WTC11 (cell line): ENCODE measurements at regions of chr17 and their contacts with region 1.

Region 1: DNA sequence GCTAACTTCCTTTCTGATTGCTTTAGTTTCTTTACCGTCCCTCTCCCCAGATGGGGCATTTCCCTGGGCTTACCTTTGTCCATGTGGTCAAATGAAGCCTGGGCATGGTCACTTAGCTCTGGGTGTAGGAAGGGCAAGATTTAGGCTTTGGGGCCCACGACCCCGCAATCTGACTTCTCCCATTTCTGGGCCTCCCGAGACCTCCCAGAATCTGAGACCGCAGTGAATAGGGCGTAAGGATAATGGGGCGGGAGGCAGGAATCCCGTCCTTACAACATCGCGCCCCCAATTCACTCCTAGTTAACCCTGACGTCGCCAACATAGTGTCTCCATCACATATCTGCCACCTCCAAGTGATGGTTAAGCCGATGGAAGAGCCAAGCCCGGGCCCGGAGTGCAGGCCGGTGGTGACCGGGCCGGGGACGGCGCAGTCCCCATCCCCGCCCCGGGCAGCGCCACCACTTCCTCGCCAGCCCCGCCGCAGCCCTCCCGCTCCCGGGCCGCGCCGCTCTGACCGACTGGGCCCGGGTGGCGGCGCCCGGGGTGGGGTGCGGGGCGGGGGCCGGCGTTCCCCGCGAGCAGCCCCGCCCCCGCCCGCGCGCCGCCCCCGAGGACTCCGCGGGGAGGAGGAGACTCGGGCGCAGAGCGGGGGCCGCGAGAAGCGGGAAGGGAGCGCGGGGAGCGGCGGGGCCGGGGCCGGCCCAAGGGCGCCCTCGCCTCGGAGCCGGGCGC is at the start of gene RHBDL3:
- DNase-seq: peak; percentile 36
- ATAC-seq: peak; percentile 31
- H3K4me3 Mint-ChIP-seq: peak within 1 kb of the TSS; percentile 78
- H3K27ac Mint-ChIP-seq: no peak within 1 kb of the TSS
- H3K4me1 Mint-ChIP-seq: peaks cover 40% of the 10 kb centered on the region
- H3K27me3 Mint-ChIP-seq: peaks cover 51% of the 10 kb centered on the region
- CTCF ChIP-seq: no peak
- total RNA-seq, gene RHBDL3: 11.3 to 13.2 TPM (median 11.6 TPM) in 3 replicates

Region 2: DNA sequence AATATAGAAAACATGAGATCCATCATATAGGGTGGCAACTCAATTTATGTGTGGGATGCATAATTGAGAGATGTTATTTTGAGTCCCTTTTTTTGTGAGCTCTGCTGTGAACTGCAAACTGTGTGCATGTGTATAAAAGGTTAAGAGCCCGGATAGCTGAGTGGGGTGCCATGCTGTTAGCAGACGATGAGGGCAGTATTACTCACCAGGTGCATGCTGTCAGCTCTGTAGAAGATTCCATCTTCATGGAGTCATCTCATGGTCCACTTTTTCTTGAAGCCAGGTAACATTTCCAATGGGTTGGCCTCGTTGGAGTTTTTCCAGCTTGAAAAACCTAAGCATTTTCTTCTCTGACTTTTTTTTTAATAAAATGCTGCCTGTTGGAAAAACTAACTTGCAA is 42.7 kb before region 1 on chr17:
- CTCF ChIA-PET with region 1: no interaction called
- POLR2A ChIA-PET with region 1: no interaction called
- DNase-seq: no peak
- ATAC-seq: no peak
- H3K4me3 Mint-ChIP-seq: no peak overlapping the region
- H3K27ac Mint-ChIP-seq: no peak overlapping the region
- H3K4me1 Mint-ChIP-seq: peaks cover 11% of the 10 kb centered on the region
- H3K27me3 Mint-ChIP-seq: no peaks in the 10 kb centered on the region
- CTCF ChIP-seq: no peak

Region 3: DNA sequence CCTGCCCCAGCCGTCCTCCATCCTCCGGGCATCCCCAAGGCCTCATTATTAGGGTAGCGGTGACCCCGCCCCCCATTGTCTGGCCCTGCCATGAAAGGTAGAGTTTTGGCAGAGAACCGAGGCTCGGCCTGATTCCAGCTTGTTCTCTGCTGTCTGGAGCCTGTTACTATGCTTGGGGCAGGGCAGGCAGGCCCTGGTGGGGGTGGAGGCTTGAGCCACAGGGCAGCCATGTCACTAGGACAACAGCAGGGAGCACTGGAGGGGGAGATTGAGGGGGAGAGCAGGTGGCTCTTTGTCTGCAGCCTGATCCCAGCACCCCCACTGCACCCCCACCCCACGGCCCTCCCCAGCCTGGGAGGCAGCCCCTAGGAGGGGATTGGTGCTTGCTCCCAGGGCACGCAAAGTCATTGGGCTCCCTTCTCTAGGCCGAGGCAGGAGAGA is 15.7 kb after region 1 on chr17:
- CTCF ChIA-PET with region 1: interaction called, 23 read pairs
- POLR2A ChIA-PET with region 1: interaction called, 3 read pairs
- DNase-seq: peak; percentile 67
- ATAC-seq: peak; percentile 34
- H3K4me3 Mint-ChIP-seq: no peak overlapping the region
- H3K27ac Mint-ChIP-seq: no peak overlapping the region
- H3K4me1 Mint-ChIP-seq: peaks cover 51% of the 10 kb centered on the region
- H3K27me3 Mint-ChIP-seq: peaks cover 5% of the 10 kb centered on the region; the same call in 1 of the 2 replicates
- CTCF ChIP-seq: no peak

Region 4: GRCh38 chr17:32288615-32289014 is 23.3 kb after region 1 on chr17:
- CTCF ChIA-PET with region 1: interaction called, 11 read pairs
- POLR2A ChIA-PET with region 1: interaction called, 3 read pairs
- DNase-seq: no peak
- ATAC-seq: peak; percentile 7; the same call in 1 of the 2 replicates
- H3K4me3 Mint-ChIP-seq: peak overlapping the region; percentile 13; the same call in 1 of the 2 replicates
- H3K27ac Mint-ChIP-seq: peak overlapping the region; percentile 96
- H3K4me1 Mint-ChIP-seq: peaks cover 62% of the 10 kb centered on the region
- H3K27me3 Mint-ChIP-seq: no peaks in the 10 kb centered on the region; the same call in 1 of the 2 replicates
- CTCF ChIP-seq: no peak